ENCODE measurements at regions of chr2 and their contacts with region 1.

Region 1: GRCh38 chr2:129748653-129749052 is 230.8 kb upstream of the RAB6C start:
- DNase-seq: peak; percentile 2
- H3K4me3 ChIP-seq: no peak overlapping the region
- H3K27ac ChIP-seq: no peak overlapping the region
- H3K4me1 ChIP-seq: no peaks in the 10 kb centered on the region
- H3K27me3 ChIP-seq: no peaks in the 10 kb centered on the region
- CTCF ChIP-seq: peak in 1 of 2 donors; percentile 25

Region 2: DNA sequence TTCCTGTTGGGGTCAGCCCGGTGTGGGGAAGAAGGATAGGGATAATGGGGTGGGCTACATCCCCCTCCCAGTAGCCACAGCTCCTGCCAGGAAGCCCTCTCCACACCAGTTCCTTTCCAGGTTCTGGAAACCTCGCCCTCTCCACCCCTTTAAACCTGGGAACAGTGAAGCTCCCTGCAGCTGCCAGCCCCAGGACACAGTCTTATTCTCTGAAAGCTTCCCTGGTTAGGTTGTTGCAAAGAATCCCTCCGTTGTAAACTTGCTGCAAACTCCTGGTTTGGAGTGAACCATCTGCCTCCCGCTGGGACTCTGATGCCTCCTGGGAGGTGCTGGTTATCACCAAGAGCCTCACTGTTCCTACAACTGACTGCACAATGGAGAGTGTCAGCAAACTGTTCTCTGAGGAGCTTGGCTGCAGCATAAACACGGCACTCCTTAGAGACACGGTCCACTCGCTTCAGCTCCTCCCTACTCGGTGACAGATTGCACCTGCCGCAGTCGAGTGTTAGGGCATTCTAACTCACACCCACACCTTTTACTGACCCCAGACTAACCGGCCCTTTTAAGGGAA is 31.0 kb before region 1 on chr2:
- CTCF ChIA-PET with region 1: no interaction called
- dilution Hi-C with region 1: no loop called
- in situ Hi-C with region 1: no loop called
- intact Hi-C with region 1: no loop called
- DNase-seq: no peak
- H3K4me3 ChIP-seq: no peak overlapping the region
- H3K27ac ChIP-seq: no peak overlapping the region
- H3K4me1 ChIP-seq: no peaks in the 10 kb centered on the region
- H3K27me3 ChIP-seq: no peaks in the 10 kb centered on the region
- CTCF ChIP-seq: no peak

Region 3: GRCh38 chr2:129780316-129781270 is 31.9 kb after region 1 on chr2:
- CTCF ChIA-PET with region 1: no interaction called
- dilution Hi-C with region 1: loop called (anchors 5 kb)
- in situ Hi-C with region 1: no loop called
- intact Hi-C with region 1: no loop called
- DNase-seq: no peak
- H3K4me3 ChIP-seq: no peak overlapping the region
- H3K27ac ChIP-seq: no peak overlapping the region
- H3K4me1 ChIP-seq: no peaks in the 10 kb centered on the region
- H3K27me3 ChIP-seq: no peaks in the 10 kb centered on the region
- CTCF ChIP-seq: no peak

Region 4: GRCh38 chr2:129885736-129886135 is 137.1 kb after region 1 on chr2:
- CTCF ChIA-PET with region 1: no interaction called
- dilution Hi-C with region 1: no loop called
- in situ Hi-C with region 1: no loop called
- intact Hi-C with region 1: no loop called
- DNase-seq: no peak
- H3K4me3 ChIP-seq: no peak overlapping the region
- H3K27ac ChIP-seq: no peak overlapping the region
- H3K4me1 ChIP-seq: no peaks in the 10 kb centered on the region
- H3K27me3 ChIP-seq: peaks cover 5% of the 10 kb centered on the region
- CTCF ChIP-seq: peak in 1 of 2 donors; percentile 17